Astrocyte of the cerebellum (primary cell): ENCODE measurements at regions of chr14 and their contacts with region 1.

Region 1: DNA sequence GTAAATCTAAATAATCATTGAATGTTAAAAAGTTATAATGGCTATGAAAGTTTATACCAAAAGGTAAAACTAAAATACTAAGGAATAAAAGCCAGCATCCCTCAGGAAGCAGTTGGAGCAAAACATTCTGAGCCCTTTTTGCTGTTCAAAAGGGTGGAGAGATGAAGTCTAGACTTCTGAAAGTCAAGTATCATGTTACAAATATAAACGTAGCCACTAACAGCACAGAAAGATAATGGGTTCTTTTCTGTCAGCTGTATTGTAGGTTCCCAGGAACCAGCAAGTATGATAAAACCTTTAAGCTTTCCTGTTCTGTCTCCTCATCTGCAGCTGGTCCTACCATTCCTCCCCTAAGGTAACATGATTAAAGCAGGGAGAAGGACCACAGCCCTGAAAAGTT is 16.4 kb upstream of the PLD4 start:
- DNase-seq: no peak
- H3K4me3 ChIP-seq: no peak overlapping the region
- CTCF ChIP-seq: no peak

Region 2: GRCh38 chr14:104957146-104958113 is 49.1 kb after region 1 on chr14:
- in situ Hi-C with region 1: loop called (anchors 5 kb)
- DNase-seq: no peak
- H3K4me3 ChIP-seq: no peak overlapping the region
- CTCF ChIP-seq: no peak